H1 (cell line): ENCODE measurements at regions of chr11 and their contacts with region 1.

Region 1: DNA sequence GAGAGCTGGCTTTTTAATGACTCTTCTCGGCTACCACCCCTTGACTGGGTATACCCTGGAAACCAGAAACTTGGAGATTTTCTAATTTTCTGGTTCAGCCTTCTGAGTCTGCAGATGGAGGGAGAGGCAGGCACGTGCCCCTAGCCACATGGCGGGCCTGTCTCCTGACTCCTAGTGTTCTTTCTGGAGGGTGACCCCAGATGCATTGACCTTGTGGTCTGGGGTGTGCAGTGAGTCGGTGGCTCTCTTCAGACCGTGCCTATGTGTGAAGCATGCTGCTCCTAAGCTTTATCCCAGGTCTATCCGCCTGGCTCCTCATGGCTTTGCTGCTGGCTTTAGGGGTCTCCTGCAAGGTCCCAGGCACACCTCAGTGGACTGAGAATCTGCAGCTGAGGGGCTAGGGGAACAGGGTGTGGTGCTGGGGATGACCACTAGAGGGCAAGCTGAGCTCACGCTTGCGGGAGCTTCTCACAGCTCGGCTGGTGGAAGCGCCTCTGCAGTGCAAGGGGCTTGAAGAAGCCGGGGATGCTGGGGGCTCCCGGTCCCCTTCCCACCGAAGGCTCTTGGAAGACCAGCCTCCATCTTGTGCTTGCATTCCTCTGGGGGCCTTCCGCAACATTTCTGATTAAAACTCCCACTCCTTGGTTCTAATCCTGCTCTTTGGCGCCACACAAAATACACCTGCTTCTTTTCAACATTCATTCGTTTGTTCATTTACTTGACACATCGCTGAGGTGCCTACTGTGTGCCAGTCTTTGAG is 51.8 kb downstream of the OTOG start:
- DNase-seq: peak; percentile 75 to 96
- H3K4me3 ChIP-seq: no peak overlapping the region
- H3K27ac ChIP-seq: no peak overlapping the region
- H3K4me1 ChIP-seq: peaks cover 0 to 4% (median 2%) of the 10 kb centered on the region in 4 experiments; a peak in 3 of 7 replicates
- H3K27me3 ChIP-seq: peaks cover 0 to 10% (median 4%) of the 10 kb centered on the region in 4 experiments; a peak in 2 of 7 replicates
- CTCF ChIP-seq: peak; percentile 97 to 99 (median 99)
- EP300 ChIP-seq: no peak
- POLR2A ChIP-seq: no peak
- RAD21 ChIP-seq: peak; percentile 98 to 99

Region 2: GRCh38 chr11:17572359-17572690 is 26.6 kb before region 1 on chr11:
- CTCF ChIA-PET with region 1: interaction called, 10 read pairs
- POLR2A ChIA-PET with region 1: no interaction called
- DNase-seq: peak in 1 of 2 experiments; percentile 40
- H3K4me3 ChIP-seq: no peak overlapping the region
- H3K27ac ChIP-seq: no peak overlapping the region
- H3K4me1 ChIP-seq: peaks cover 0 to 6% (median 2%) of the 10 kb centered on the region in 4 experiments; a peak in 5 of 7 replicates
- H3K27me3 ChIP-seq: no peaks in the 10 kb centered on the region
- CTCF ChIP-seq: no peak
- EP300 ChIP-seq: no peak
- POLR2A ChIP-seq: no peak
- RAD21 ChIP-seq: no peak

Region 3: GRCh38 chr11:17588166-17588565 is 10.7 kb before region 1 on chr11:
- CTCF ChIA-PET with region 1: interaction called, 16 read pairs
- POLR2A ChIA-PET with region 1: no interaction called
- DNase-seq: no peak
- H3K4me3 ChIP-seq: no peak overlapping the region
- H3K27ac ChIP-seq: no peak overlapping the region
- H3K4me1 ChIP-seq: no peaks in the 10 kb centered on the region
- H3K27me3 ChIP-seq: no peaks in the 10 kb centered on the region
- CTCF ChIP-seq: no peak
- EP300 ChIP-seq: no peak
- POLR2A ChIP-seq: no peak
- RAD21 ChIP-seq: no peak

Region 4: GRCh38 chr11:17635551-17635938 is 36.7 kb after region 1 on chr11:
- CTCF ChIA-PET with region 1: interaction called, 17 read pairs
- POLR2A ChIA-PET with region 1: no interaction called
- DNase-seq: no peak
- H3K4me3 ChIP-seq: no peak overlapping the region
- H3K27ac ChIP-seq: no peak overlapping the region
- H3K4me1 ChIP-seq: no peaks in the 10 kb centered on the region
- H3K27me3 ChIP-seq: no peaks in the 10 kb centered on the region
- CTCF ChIP-seq: peak; percentile 47 to 56 (median 53)
- EP300 ChIP-seq: no peak
- POLR2A ChIP-seq: no peak
- RAD21 ChIP-seq: peak; percentile 24 to 36; a peak in 2 of 4 replicates

Region 5: GRCh38 chr11:17713851-17714250 is 115.0 kb after region 1 on chr11:
- CTCF ChIA-PET with region 1: interaction called, 96 read pairs
- POLR2A ChIA-PET with region 1: interaction called, 5 read pairs
- DNase-seq: no peak
- H3K4me3 ChIP-seq: no peak overlapping the region
- H3K27ac ChIP-seq: no peak overlapping the region
- H3K4me1 ChIP-seq: peaks cover 0 to 5% (median 2%) of the 10 kb centered on the region in 4 experiments; a peak in 2 of 7 replicates
- H3K27me3 ChIP-seq: peaks cover 22 to 52% (median 35%) of the 10 kb centered on the region in 4 experiments
- CTCF ChIP-seq: no peak
- EP300 ChIP-seq: no peak
- POLR2A ChIP-seq: no peak
- RAD21 ChIP-seq: no peak

Region 6: DNA sequence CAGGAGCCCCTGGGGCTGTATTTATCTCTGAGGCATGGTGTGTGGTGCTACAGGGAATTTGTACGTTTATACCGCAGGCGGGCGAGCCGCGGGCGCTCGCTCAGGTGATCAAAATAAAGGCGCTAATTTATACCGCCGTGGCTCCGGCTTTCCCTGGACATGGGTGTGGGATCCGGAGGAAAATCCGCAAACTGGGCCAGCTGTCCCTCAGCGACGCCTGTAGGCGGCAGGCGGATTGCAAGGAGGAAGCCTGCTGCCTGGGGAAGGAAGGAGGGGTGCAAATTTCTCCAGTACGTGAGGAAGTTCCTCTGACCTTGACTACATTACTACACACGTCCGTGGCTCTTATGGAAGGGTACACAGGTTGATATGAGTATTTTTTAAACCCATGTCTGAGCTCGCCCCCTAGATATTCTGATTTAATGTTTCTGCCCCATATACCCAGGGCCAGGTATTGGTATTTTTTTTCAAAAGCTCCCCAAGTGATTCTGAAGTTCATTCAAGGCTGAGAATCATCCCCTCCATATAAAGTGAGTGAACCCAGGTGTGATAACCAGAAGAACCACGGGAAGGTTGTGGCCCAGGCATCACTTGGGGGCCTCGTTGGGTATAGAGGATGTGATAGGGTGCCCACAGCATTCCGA is 123.2 kb after region 1 on chr11:
- CTCF ChIA-PET with region 1: interaction called, 96 read pairs
- POLR2A ChIA-PET with region 1: interaction called, 5 read pairs
- DNase-seq: peak in 1 of 2 experiments; percentile 65
- H3K4me3 ChIP-seq: peak overlapping the region in 1 of 4 experiments; percentile 56; a peak in 2 of 8 replicates
- H3K27ac ChIP-seq: no peak overlapping the region
- H3K4me1 ChIP-seq: peaks cover 0 to 31% (median 14%) of the 10 kb centered on the region in 4 experiments; a peak in 6 of 7 replicates
- H3K27me3 ChIP-seq: peaks cover 52 to 72% (median 60%) of the 10 kb centered on the region in 4 experiments
- CTCF ChIP-seq: peak; percentile 76 to 90 (median 77)
- EP300 ChIP-seq: no peak
- POLR2A ChIP-seq: no peak
- RAD21 ChIP-seq: peak; percentile 62 to 72